ENCODE measurements at regions of chr15 and their contacts with region 1.

Region 1: DNA sequence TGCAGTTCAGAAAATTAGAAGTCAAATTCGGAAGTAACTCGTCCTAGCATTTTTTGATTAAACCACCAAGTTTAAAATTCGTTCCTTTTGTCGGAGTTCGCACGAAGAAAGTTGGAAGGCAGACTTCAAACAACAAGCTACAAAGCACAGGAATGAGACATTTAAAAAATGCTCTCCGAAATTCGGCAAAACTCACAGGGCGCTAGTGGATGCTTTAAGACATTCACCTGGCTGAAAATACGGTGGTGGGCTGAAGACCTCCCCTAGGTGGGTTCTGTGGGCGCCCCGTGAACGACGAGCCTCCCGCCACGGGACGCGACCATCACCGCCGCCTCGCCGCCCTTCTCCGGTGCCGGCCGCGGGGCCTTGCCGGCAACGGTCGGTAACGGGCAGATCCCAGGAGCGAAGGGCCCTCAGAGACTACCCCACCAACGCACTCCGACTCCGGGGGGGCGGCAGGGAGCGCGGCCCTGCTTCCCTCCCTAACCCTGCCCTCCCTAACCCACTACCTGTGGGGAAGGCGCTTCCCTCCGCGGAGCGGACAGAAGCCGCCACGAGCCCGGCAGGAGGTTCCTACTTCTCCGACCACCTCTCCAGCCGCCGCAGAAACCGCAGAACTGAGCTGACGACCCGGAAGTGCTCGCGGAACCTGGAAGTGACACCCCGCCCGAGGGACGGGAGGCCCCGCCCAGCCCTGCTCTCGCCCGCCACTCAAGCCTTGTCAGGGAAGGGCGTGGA is at the start of gene GTF2A2:
- DNase-seq: peak in 9 of 10 donors; percentile 89 to 97 (median 94)
- H3K4me3 ChIP-seq: peak within 1 kb of the TSS; percentile 60 to 100 (median 94)
- H3K27ac ChIP-seq: peak within 1 kb of the TSS in 54 of 59 donors; percentile 8 to 90 (median 73)
- H3K27me3 ChIP-seq: no peaks in the 10 kb centered on the region
- CTCF ChIP-seq: peak in 23 of 56 donors; percentile 5 to 50 (median 27)
- total RNA-seq, gene GTF2A2: 37.2 to 97.5 (median 63.8) TPM

Region 2: GRCh38 chr15:59516655-59517461 is 140.2 kb before region 1 on chr15:
- intact Hi-C with region 1: no loop called
- DNase-seq: no peak
- H3K4me3 ChIP-seq: no peak overlapping the region
- H3K27ac ChIP-seq: peak overlapping the region in 22 of 59 donors; percentile 6 to 67 (median 36)
- H3K27me3 ChIP-seq: no peaks in the 10 kb centered on the region
- CTCF ChIP-seq: no peak

Region 3: DNA sequence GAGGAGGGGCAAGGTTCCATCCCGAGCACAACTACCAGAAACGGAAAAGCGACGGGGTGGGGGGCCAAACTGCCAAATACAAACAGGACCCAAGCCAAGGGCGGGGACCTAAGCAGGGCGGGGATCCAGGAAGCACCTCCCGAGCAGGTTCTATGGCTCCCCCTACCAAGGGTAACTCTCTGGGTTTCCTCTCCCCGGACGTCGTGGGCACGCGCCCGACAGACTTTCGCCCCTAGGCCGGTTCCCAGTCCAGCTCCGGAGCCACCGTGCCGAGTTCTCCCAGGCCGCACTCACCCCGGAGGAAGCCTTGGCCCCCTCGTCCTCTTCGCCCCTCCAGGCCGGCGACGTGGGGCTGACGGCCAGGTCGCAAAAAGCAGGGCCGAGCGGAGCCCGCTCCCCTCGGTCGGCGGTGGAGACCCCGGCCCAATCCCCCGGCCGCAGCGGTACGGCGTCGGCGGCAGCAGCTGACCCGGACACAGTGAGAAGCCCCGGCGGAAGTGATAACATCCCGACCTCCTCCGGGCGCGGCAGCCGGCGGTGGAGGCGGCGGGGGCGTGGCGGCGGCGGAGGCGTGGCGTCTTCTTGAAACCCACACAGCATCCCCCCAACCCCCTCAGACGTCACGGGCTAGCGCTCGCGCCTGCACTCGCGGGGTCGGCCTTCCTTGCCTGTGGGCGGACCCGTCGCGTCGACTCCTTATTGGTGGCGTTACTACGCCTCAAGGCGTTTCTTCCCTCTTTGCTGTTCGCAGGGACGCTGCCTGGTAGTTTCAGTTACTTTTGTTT is 32.0 kb after region 1 on chr15 and contains the start of gene BNIP2:
- intact Hi-C with region 1: loop called in 1 of 2 experiments (anchors 1 kb)
- DNase-seq: peak; percentile 90 to 96 (median 94)
- H3K4me3 ChIP-seq: peak within 1 kb of the TSS; percentile 74 to 100 (median 97)
- H3K27ac ChIP-seq: peak within 1 kb of the TSS; percentile 49 to 98 (median 91)
- H3K27me3 ChIP-seq: no peaks in the 10 kb centered on the region
- CTCF ChIP-seq: peak in 30 of 56 donors; percentile 2 to 52 (median 27)
- total RNA-seq, gene BNIP2: 30.0 to 65.9 (median 43.4) TPM

Region 4: DNA sequence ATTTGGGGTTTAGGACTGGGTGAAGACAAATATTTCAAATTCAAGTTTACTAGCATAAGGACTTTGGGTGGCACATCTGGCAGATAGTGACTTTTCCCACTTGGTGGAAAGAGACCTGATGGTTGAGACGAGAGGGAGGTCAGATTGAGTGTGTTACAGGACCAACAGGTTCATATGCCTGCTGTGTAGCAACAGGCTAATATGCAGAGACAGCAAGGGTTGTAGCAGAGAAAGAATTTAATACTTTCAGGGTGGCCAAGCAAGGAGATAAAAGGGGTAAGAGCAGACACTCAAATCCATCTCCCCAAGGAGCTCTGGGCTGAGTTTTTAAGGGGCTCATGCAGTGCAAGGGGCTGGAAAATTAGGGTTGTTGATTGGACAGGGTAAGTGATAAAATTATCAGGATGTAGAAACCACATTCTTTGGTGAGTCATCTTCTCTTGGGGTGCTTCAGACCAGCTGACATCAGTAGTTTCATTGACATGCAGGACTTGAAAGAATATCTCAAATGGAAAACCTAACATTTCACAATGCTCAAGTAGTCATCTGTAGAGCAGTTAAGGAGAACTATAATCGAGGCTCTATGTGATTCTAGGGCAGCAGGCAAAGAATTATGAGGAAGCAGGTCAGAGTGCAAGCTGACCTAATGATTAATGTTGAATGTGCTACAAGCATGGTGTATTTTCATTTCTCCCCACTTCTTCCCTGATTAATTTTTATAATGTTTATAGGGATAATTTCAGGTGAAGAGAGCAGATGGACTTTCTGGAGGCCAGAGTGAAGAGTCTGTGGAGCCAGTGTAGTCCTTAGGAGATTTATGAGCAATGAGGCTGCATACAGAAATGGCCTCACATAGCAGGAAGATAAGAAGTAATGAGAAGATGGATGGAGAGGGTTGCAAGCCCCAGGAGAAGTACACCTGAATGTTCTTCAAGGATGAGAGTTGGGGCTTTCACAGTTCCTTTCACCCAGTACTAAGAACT is 360.8 kb after region 1 on chr15:
- intact Hi-C with region 1: no loop called
- DNase-seq: no peak
- H3K4me3 ChIP-seq: no peak overlapping the region
- H3K27ac ChIP-seq: no peak overlapping the region
- H3K27me3 ChIP-seq: peaks cover 0 to 78% (median 33%) of the 10 kb centered on the region in 45 donors
- CTCF ChIP-seq: no peak